OCI-LY7 (cell line): ENCODE measurements at regions of chr7 and their contacts with region 1.

Region 1: DNA sequence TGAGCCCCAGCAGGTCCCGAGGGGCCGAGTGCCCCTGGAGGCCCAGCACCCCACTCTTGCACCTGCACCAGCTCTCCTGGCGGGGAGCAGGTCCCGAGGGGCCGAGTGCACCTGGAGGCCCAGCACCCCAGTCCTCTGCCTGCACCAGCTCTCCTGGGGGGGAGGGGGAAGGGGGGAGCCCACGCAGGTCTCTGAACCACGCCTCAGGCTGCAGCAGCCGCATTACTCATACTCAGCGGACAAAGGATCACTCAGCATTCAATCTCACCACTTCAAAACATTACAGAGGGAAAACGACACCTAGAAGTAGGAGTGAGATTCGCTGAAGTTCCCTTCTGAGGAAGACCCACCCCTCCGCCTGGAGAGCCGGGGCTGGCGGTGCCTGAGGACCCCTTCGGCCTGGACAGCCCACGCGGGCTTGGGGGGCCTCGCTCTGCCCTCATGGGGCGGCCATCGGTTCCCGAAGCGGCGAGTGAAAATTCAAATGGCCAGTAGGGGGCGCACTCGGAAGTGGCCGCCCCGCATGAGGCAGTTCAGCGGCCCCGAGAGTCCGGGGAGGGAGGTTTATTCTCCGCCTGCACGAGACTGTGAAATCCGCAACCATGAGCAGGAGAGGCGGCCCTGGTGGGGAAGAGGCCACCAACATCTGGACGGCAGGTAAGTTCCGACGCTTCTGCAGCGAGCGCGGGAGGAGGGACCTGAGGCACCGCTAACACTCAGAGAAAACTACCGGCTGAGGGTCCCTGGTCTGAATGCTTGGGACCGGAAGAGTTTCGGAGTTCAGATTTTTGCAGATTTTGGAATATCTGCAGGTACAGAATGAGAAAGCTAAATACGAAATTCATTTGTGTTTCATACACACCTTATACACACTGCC is 1.1 kb upstream of the GPER1 start:
- DNase-seq: peak; percentile 94
- H3K4me3 ChIP-seq: peak overlapping the region; percentile 76
- H3K27ac ChIP-seq: peak overlapping the region; percentile 91
- H3K4me1 ChIP-seq: peaks cover 49% of the 10 kb centered on the region
- CTCF ChIP-seq: peak; percentile 94

Region 2: GRCh38 chr7:974820-975681 is 111.8 kb before region 1 on chr7 and contains the start of gene COX19:
- CTCF ChIA-PET with region 1: no interaction called
- POLR2A ChIA-PET with region 1: no interaction called
- intact Hi-C with region 1: loop called (anchors 1 kb)
- DNase-seq: peak; percentile 94
- H3K4me3 ChIP-seq: peak within 1 kb of the TSS; percentile 100
- H3K27ac ChIP-seq: peak within 1 kb of the TSS; percentile 73
- H3K4me1 ChIP-seq: peaks cover 74% of the 10 kb centered on the region
- CTCF ChIP-seq: no peak
- total RNA-seq, gene COX19: 20.3 and 23.2 TPM in 2 replicates

Region 3: DNA sequence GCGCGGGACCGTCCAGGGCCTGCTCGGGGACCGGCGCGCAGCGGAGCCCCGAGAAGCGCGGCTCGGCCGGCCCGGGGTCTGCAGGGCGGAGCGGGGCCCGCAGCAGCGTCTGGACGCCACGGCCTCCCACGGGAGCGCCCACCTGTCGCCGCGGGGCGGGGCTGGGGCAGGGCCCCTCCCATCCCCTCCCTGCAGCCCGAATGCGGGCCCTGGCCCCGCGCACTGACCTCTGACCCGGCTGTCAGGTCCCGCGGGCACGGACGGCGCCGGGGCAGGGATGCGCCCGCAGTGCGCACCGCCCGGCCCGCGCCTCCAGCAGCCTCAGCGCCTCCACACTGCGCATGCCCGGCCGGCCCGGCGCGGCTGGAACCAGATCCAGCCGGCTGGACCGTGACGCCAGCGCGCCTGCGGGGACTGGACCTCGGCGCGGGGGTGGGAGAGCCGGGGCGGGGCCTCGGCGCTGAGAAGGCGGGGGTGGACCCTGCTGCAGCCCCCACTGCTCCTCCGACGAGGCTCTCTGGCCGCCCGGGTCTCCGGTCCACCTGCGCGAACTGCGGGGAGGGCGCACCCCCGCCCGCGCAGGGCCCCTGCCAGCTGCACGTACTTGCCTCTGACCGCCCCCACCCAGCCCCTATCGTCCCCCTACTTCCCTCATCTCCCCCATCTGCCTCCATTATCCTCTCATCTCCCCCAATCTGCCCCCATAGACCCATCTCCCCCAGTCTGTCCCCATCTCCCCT is 58.6 kb before region 1 on chr7:
- CTCF ChIA-PET with region 1: interaction called, 4 read pairs
- POLR2A ChIA-PET with region 1: interaction called, 12 read pairs
- intact Hi-C with region 1: loop called (anchors 1 kb)
- DNase-seq: peak; percentile 89
- H3K4me3 ChIP-seq: peak overlapping the region; percentile 85
- H3K27ac ChIP-seq: peak overlapping the region; percentile 95
- H3K4me1 ChIP-seq: peaks cover 69% of the 10 kb centered on the region
- CTCF ChIP-seq: no peak

Region 4: GRCh38 chr7:1073142-1073977 is 13.5 kb before region 1 on chr7:
- CTCF ChIA-PET with region 1: no interaction called
- POLR2A ChIA-PET with region 1: interaction called, 6 read pairs
- intact Hi-C with region 1: loop called (anchors 1 kb)
- DNase-seq: no peak
- H3K4me3 ChIP-seq: no peak overlapping the region
- H3K27ac ChIP-seq: no peak overlapping the region
- H3K4me1 ChIP-seq: peaks cover 19% of the 10 kb centered on the region
- CTCF ChIP-seq: no peak

Region 5: GRCh38 chr7:1123715-1124114 is 36.9 kb after region 1 on chr7:
- CTCF ChIA-PET with region 1: no interaction called
- POLR2A ChIA-PET with region 1: no interaction called
- intact Hi-C with region 1: no loop called
- DNase-seq: no peak
- H3K4me3 ChIP-seq: no peak overlapping the region
- H3K27ac ChIP-seq: no peak overlapping the region
- H3K4me1 ChIP-seq: peaks cover 13% of the 10 kb centered on the region
- CTCF ChIP-seq: no peak

Region 6: GRCh38 chr7:1151653-1152425 is 65.0 kb after region 1 on chr7:
- CTCF ChIA-PET with region 1: no interaction called
- POLR2A ChIA-PET with region 1: no interaction called
- intact Hi-C with region 1: loop called (anchors 5 kb)
- DNase-seq: peak; percentile 43
- H3K4me3 ChIP-seq: no peak overlapping the region
- H3K27ac ChIP-seq: peak overlapping the region; percentile 90
- H3K4me1 ChIP-seq: peaks cover 62% of the 10 kb centered on the region
- CTCF ChIP-seq: no peak

Region 7: DNA sequence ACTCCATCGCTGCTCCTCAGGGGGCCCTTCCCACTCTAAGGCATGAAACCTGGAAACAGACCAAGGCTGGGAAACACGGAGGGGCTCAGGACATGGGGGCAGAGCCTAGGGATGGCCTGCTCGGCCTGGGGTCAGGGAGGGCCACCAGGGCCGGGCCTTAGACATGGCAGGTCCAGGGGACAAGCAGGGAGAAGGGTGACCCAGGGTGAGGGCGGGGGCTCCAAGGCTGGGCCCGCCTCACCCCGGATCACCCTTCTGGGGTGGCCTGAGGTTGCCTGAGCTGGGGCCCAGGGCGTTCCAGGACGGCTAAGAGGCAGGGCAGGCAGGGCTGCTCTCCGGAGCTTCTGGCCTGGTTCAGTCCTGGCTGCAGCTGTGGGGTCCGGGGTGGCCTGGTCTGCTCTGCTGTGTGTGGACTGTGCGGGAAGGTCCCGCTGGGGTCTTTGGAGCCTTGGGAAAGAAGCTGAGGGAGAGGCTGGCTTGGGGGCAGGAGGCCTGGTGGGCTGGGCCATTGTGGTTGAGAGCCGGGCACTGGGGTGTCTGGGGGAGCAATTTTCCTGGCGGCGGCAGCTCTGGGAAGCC is 198.0 kb after region 1 on chr7:
- CTCF ChIA-PET with region 1: no interaction called
- POLR2A ChIA-PET with region 1: no interaction called
- intact Hi-C with region 1: no loop called
- DNase-seq: no peak
- H3K4me3 ChIP-seq: no peak overlapping the region
- H3K27ac ChIP-seq: no peak overlapping the region
- H3K4me1 ChIP-seq: no peaks in the 10 kb centered on the region
- CTCF ChIP-seq: no peak

Region 8: GRCh38 chr7:1503816-1504775 is 417.3 kb after region 1 on chr7 and contains the start of gene INTS1:
- CTCF ChIA-PET with region 1: no interaction called
- POLR2A ChIA-PET with region 1: no interaction called
- intact Hi-C with region 1: loop called (anchors 2 kb)
- DNase-seq: peak; percentile 94
- H3K4me3 ChIP-seq: peak within 1 kb of the TSS; percentile 100
- H3K27ac ChIP-seq: peak within 1 kb of the TSS; percentile 90
- H3K4me1 ChIP-seq: peaks cover 48% of the 10 kb centered on the region
- CTCF ChIP-seq: peak; percentile 84
- total RNA-seq, gene INTS1: 61.5 and 83.6 TPM in 2 replicates